ENCODE measurements at regions of chr6 and their contacts with region 1.

Region 1: GRCh38 chr6:26613689-26614683 is 17.2 kb downstream of the ABT1 start:
- DNase-seq: no peak
- ATAC-seq: no peak
- H3K4me3 ChIP-seq: no peak overlapping the region
- H3K27ac ChIP-seq: no peak overlapping the region
- H3K4me1 ChIP-seq: peaks cover 8 to 10% of the 10 kb centered on the region in 2 experiments; a peak in 3 of 5 replicates
- H3K27me3 ChIP-seq: no peaks in the 10 kb centered on the region
- CTCF ChIP-seq: no peak
- EP300 ChIP-seq: no peak
- POLR2A ChIP-seq: no peak
- RAD21 ChIP-seq: no peak

Region 2: GRCh38 chr6:26342106-26343004 is 271.6 kb before region 1 on chr6:
- CTCF ChIA-PET with region 1: no interaction called
- POLR2A ChIA-PET with region 1: no interaction called
- in situ Hi-C with region 1: no loop called
- intact Hi-C with region 1: no loop called
- DNase-seq: no peak
- ATAC-seq: peak; percentile 16
- H3K4me3 ChIP-seq: no peak overlapping the region
- H3K27ac ChIP-seq: no peak overlapping the region; the same call in 2 of the 3 replicates
- H3K4me1 ChIP-seq: peaks cover 11 to 54% of the 10 kb centered on the region in 2 experiments
- H3K27me3 ChIP-seq: no peaks in the 10 kb centered on the region
- CTCF ChIP-seq: no peak; a peak in 1 of 6 replicates
- EP300 ChIP-seq: no peak
- POLR2A ChIP-seq: no peak
- RAD21 ChIP-seq: no peak

Region 3: DNA sequence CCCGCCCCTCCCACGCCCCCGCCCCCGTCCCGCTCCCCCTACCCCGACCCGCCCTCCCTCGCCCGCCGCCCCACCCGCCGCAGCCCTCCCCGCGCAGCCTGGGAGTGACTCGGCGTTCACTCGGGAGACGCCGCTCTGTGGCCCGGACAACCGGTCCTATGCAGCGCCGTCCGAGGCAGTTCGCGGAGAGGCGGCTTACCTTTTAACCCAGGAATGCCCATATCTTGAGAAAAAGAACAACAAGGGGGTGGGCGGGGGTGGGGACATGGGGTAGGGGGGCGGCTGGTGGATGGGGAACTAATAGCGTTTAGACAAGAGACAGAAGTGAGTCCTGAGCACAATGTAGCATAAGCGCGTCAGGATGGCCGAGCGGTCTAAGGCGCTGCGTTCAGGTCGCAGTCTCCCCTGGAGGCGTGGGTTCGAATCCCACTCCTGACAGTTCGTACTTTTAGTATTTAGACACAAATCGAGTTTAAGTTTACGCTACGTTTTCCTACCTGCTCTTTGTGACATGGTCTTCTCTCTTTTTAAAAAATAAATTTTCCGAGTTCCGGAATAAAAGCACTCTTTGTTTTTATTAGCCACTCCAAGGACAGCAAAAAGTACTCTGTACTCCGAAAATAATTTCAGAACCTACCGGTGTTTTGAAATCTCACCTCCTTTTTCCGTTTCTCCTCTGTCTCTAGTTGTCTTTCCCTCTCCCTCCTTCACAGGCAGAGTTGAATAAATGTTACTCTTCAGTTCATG is 93.0 kb before region 1 on chr6:
- CTCF ChIA-PET with region 1: no interaction called
- POLR2A ChIA-PET with region 1: no interaction called
- in situ Hi-C with region 1: no loop called
- intact Hi-C with region 1: no loop called
- DNase-seq: peak; percentile 94 to 98 (median 98)
- ATAC-seq: peak; percentile 78
- H3K4me3 ChIP-seq: peak overlapping the region; percentile 70
- H3K27ac ChIP-seq: peak overlapping the region; percentile 98
- H3K4me1 ChIP-seq: peaks cover 13 to 28% of the 10 kb centered on the region in 2 experiments; a peak in 4 of 5 replicates
- H3K27me3 ChIP-seq: no peaks in the 10 kb centered on the region
- CTCF ChIP-seq: peak in 1 of 3 experiments; percentile 8; a peak in 2 of 6 replicates
- EP300 ChIP-seq: peak; percentile 68
- POLR2A ChIP-seq: no peak
- RAD21 ChIP-seq: no peak

Region 4: GRCh38 chr6:26556263-26557070 is 57.5 kb before region 1 on chr6:
- CTCF ChIA-PET with region 1: no interaction called
- POLR2A ChIA-PET with region 1: no interaction called
- in situ Hi-C with region 1: no loop called
- intact Hi-C with region 1: no loop called
- DNase-seq: peak; percentile 75 to 95 (median 81)
- ATAC-seq: peak; percentile 67
- H3K4me3 ChIP-seq: peak overlapping the region; percentile 51
- H3K27ac ChIP-seq: peak overlapping the region; percentile 35
- H3K4me1 ChIP-seq: peaks cover 0 to 19% of the 10 kb centered on the region in 2 experiments; a peak in 3 of 5 replicates
- H3K27me3 ChIP-seq: no peaks in the 10 kb centered on the region
- CTCF ChIP-seq: no peak
- EP300 ChIP-seq: peak; percentile 70; the same call in 1 of the 2 replicates
- POLR2A ChIP-seq: no peak
- RAD21 ChIP-seq: 0 out of 4 replicates have a peak, but pooled peaks have one; percentile 13 to 22

Region 5: GRCh38 chr6:26629359-26629758 is 15.4 kb after region 1 on chr6:
- CTCF ChIA-PET with region 1: no interaction called
- POLR2A ChIA-PET with region 1: no interaction called
- in situ Hi-C with region 1: no loop called
- intact Hi-C with region 1: no loop called
- DNase-seq: no peak
- ATAC-seq: no peak
- H3K4me3 ChIP-seq: no peak overlapping the region
- H3K27ac ChIP-seq: no peak overlapping the region
- H3K4me1 ChIP-seq: no peaks in the 10 kb centered on the region
- H3K27me3 ChIP-seq: no peaks in the 10 kb centered on the region
- CTCF ChIP-seq: no peak
- EP300 ChIP-seq: no peak
- POLR2A ChIP-seq: no peak
- RAD21 ChIP-seq: no peak

Region 6: DNA sequence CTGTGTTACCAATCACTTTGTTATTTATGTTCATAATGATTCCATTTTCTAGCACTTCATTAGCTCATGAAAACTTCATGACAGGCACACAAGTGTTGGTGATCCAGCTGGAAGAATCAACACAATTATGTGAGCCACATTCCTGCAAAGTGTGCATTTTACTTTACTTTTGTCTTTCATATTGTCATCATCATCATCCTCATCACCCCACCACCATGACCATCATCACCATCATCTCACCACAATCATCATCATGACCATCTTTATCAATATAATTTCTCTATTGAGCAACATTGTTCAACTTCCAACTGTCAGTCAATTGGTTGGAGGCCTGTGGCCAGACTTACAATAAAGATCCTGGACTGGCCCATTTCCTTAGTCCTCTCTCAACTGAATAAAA is 474.1 kb after region 1 on chr6:
- CTCF ChIA-PET with region 1: no interaction called
- POLR2A ChIA-PET with region 1: no interaction called
- in situ Hi-C with region 1: loop called (anchors 5 kb)
- intact Hi-C with region 1: no loop called
- DNase-seq: no peak
- ATAC-seq: no peak
- H3K4me3 ChIP-seq: no peak overlapping the region
- H3K27ac ChIP-seq: no peak overlapping the region
- H3K4me1 ChIP-seq: peaks cover 0 to 3% of the 10 kb centered on the region in 2 experiments; a peak in 2 of 5 replicates
- H3K27me3 ChIP-seq: no peaks in the 10 kb centered on the region
- CTCF ChIP-seq: no peak
- EP300 ChIP-seq: no peak
- POLR2A ChIP-seq: no peak
- RAD21 ChIP-seq: no peak